ENCODE measurements at regions of chr3 and their contacts with region 1.

Region 1: DNA sequence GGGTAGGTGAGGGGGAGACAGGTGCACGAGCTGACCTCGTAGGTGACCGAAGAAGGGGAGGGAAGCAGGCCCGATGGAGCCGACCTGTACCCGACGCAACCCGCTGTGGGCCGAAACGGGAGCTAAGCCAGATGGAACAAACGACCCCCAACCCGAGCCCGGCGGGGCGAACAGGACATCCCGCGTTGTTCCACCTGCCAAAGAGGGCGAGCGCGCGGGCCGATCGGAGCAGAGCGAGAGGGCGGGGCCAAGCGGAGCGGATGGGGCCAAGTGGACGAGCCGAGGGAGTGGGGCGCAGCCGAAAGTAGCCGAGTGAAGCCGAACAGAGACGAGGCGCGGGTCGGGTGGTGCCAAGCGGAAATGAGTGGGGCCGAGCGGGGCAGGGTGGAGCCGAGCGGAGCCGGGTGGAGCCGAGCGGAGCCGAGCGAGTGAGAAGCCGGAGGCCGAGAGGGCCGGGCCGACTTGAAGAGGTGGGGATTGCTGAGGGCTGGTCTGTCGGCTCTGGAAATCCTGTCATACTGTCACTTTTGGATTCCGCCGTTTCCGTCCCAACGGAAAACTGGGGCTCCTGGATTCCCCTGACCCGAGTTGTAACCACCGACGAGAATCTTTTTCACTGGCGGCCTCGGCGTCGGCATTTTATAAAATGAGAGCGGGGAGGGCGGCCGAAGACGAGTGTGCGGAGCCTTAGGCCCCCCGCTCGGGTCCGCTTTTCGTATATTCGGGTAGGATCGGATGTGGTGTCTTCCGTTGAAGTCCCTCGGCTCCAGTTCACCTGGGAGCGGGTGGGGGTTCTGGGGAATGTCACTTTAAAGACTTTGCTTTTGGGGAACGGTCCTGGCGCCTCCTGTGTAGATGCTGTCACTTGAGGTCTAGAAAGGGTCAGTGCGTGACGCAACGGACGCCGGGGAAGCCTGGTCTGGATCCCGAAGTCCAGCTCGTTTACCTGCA is 15.6 kb upstream of the WNT7A start:
- DNase-seq: peak; percentile 91 to 95 (median 95)
- H3K4me3 ChIP-seq: peak overlapping the region; percentile 53 to 89 (median 68)
- H3K27ac ChIP-seq: peak overlapping the region; percentile 76 to 82
- H3K4me1 ChIP-seq: peaks cover 12 to 37% (median 25%) of the 10 kb centered on the region in 4 experiments
- H3K27me3 ChIP-seq: peaks cover 0 to 5% (median 0%) of the 10 kb centered on the region in 5 experiments

Region 2: DNA sequence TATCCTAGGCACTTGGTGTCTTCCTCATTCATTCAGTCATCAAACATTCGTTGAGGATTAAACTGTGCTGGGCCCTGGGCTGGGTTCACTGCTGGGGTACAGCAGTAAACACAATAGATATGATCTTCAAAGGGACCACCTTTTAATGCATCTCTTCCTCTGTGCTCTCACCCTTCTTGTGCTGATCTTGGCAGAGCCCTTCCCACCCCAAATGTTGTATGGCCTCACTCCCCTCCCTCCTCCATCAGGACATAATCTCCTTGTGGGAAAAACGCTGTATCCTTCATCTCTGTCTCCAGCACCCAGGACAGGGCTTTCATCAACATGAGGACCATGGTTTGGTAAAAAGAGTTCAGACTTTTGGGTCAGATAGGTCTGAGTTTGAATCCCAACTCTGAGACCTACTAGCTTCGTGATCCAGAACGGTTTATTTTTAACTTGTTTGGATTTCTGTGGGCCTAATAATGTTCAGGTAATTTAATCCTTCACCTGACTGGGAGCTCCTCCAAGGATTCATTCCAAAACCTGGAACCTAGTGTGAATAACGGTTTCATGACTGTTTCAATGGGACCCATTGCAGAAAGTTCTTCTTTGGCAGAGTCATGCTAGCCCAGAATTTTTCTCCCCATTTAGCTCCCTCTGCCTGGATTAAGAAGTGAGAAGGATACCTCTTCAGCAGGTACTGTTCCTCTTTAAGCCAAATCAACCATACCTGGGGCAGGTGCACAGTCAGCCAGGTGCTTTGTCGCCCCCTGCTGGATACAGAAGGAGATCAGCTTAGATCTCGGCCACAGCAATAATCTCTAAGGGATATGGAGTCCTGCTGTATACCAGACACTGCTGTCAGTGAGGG is 10.4 kb before region 1 on chr3:
- CTCF ChIA-PET with region 1: interaction called, 23 read pairs
- POLR2A ChIA-PET with region 1: no interaction called
- DNase-seq: peak; percentile 41 to 62 (median 61)
- H3K4me3 ChIP-seq: no peak overlapping the region
- H3K27ac ChIP-seq: no peak overlapping the region
- H3K4me1 ChIP-seq: peaks cover 0 to 15% (median 10%) of the 10 kb centered on the region in 4 experiments
- H3K27me3 ChIP-seq: peaks cover 2 to 41% (median 16%) of the 10 kb centered on the region in 5 experiments

Region 3: GRCh38 chr3:14113965-14114635 is 218.7 kb after region 1 on chr3:
- CTCF ChIA-PET with region 1: interaction called, 41 read pairs
- POLR2A ChIA-PET with region 1: no interaction called
- DNase-seq: peak in 1 of 3 donors; percentile 24
- H3K4me3 ChIP-seq: no peak overlapping the region
- H3K27ac ChIP-seq: no peak overlapping the region
- H3K4me1 ChIP-seq: peaks cover 0 to 12% (median 8%) of the 10 kb centered on the region in 4 experiments
- H3K27me3 ChIP-seq: no peaks in the 10 kb centered on the region

Region 4: DNA sequence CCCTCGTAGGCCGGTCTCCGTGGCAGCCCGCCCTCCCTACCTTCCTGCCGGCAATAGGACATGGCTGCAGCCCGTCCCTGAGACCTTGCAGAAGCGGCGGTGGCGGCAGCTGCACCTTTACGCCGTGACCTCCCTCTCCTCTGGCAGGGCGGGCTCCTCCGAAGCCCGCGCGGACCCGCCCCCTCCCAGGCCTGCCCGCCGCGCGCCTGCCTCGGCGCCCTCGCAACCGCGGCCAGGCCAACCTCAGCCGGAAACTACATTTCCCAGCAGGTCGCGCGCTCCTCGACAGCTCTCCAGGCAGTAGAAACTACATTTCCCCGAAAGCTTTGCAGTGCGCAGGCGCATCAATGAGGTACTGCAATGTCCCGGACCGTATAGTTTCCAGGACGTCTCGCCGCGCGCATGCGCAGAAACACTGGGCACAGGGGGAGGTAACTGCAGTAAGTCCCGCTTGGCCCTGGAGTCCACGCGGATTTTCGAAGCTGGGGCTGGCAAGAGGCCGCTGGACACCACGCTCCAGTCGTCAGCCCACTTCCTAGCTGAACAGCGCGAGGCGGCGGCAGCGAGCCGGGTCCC is 229.3 kb after region 1 on chr3 and contains the starts of genes CHCHD4 and TMEM43:
- CTCF ChIA-PET with region 1: interaction called, 14 read pairs
- POLR2A ChIA-PET with region 1: no interaction called
- DNase-seq: peak; percentile 98 to 99 (median 99)
- H3K4me3 ChIP-seq: peak within 1 kb of the TSS; percentile 80 to 99 (median 92)
- H3K27ac ChIP-seq: peak within 1 kb of the TSS; percentile 76 to 91
- H3K4me1 ChIP-seq: peaks cover 2 to 49% (median 35%) of the 10 kb centered on the region in 4 experiments
- H3K27me3 ChIP-seq: no peaks in the 10 kb centered on the region